ENCODE measurements at regions of chr13 and their contacts with region 1.

Region 1: DNA sequence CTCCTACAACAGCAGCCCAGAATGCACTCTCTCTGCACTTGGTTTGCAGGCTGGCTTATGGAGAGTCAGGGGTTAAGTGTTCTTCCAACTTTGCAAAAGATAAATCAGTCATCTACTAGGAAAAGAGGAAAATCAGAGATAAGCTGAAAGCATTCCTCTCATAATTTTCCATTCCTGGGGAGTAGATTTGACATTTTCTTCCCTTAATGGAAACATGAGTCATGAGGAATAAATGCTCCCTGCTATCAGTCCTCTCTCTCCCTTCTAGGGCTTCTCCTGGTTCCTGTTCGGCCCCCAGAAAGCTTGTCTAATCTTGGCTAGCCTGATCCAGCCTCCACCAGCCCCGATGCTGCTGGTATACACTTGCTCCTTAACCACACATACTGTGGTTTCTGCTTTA is 28.4 kb upstream of the ENOX1 start:
- DNase-seq: no peak
- ATAC-seq: no peak
- H3K4me3 ChIP-seq: no peak overlapping the region
- H3K4me3 Mint-ChIP-seq: no peak overlapping the region
- H3K27ac ChIP-seq: no peak overlapping the region
- H3K27ac Mint-ChIP-seq: no peak overlapping the region
- H3K4me1 ChIP-seq: no peaks in the 10 kb centered on the region
- H3K4me1 Mint-ChIP-seq: no peaks in the 10 kb centered on the region
- H3K27me3 ChIP-seq: peaks cover 0 to 2% of the 10 kb centered on the region in 2 experiments
- H3K27me3 Mint-ChIP-seq: peaks cover 35% of the 10 kb centered on the region
- CTCF ChIP-seq: no peak

Region 2: DNA sequence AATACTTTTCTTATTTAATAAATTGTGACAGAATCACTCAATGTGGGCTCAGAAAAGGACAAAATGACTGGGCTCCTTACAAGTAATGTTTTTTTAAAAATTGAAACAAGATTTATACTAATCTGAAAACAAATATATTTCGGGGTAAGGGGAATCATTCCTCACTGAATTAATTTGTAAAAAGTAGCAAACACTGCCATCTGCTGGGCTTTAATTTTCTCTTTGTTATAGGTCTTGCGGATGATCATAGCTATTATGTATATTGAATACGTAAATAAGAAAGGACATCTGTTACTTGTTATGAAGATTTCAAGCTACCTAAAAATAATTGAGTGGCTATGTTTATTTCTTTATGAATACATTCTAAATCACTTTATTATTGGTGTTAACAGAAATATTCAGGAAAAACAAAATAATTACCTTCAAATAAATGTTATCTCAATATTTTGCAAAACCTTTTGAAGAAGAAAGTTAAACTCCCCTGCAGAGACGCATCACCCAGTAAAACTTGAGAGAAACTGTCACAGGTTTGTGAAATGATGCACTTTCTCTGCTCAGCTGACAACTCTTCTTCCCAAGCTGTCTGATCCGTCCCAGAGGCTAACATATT is 10.6 kb before region 1 on chr13:
- CTCF ChIA-PET with region 1: interaction called, 12 read pairs
- POLR2A ChIA-PET with region 1: no interaction called
- intact Hi-C with region 1: no loop called
- DNase-seq: peak in 3 of 9 experiments; percentile 22 to 60 (median 55)
- ATAC-seq: no peak
- H3K4me3 ChIP-seq: no peak overlapping the region
- H3K4me3 Mint-ChIP-seq: no peak overlapping the region
- H3K27ac ChIP-seq: no peak overlapping the region
- H3K27ac Mint-ChIP-seq: no peak overlapping the region
- H3K4me1 ChIP-seq: no peaks in the 10 kb centered on the region
- H3K4me1 Mint-ChIP-seq: peaks cover 2% of the 10 kb centered on the region
- H3K27me3 ChIP-seq: no peaks in the 10 kb centered on the region
- H3K27me3 Mint-ChIP-seq: peaks cover 5% of the 10 kb centered on the region
- CTCF ChIP-seq: peak; percentile 69